ENCODE measurements at regions of chr16 and their contacts with region 1.

Region 1: DNA sequence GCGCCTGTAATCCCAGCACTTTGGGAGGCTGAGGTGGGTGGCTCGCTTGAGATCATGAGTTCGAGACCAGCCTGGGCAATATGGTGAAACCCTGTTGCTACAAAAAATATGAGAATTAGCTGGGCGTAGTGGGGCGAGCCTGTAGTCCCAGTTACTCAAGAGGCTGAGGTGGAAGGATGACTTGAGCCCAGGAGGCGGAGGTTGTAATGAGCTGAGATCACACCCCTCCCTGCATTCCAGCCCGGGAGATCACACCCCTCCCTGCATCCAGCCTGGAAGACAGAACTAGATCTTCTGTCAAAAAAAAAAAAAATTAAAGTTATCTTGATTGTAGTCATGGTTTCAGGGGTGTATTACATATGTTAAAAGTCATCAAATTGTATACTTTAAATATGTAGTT is 26.8 kb upstream of the GLG1 start:
- DNase-seq: no peak
- H3K4me3 ChIP-seq: no peak overlapping the region
- H3K27ac ChIP-seq: no peak overlapping the region
- H3K4me1 ChIP-seq: no peaks in the 10 kb centered on the region
- H3K27me3 ChIP-seq: no peaks in the 10 kb centered on the region
- CTCF ChIP-seq: no peak
- EP300 ChIP-seq: no peak
- POLR2A ChIP-seq: no peak

Region 2: DNA sequence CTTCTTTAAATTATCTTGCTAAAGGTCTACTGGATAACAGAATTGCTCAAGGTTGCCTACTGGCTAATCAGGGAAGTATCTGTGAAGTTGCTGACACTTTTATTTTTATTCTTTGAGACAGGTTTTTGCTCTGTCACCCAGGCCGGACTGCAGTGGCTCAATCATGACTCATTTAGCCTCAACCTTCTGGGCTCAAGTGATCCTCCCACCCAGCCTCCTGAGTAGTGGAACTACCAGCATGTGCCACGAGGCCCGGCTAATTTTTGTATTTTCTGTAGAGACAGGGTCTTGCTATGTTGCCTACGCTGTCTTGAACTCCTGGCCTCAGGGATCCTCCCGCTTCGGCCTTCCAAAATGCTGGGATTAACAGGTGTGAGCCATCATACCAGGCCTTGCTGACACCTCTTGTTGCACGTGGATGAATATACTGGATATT is 69.8 kb before region 1 on chr16:
- intact Hi-C with region 1: loop called in 1 of 4 experiments (anchors 10 kb)
- DNase-seq: no peak
- H3K4me3 ChIP-seq: no peak overlapping the region
- H3K27ac ChIP-seq: no peak overlapping the region
- H3K4me1 ChIP-seq: peaks cover 7% of the 10 kb centered on the region
- H3K27me3 ChIP-seq: no peaks in the 10 kb centered on the region
- CTCF ChIP-seq: no peak
- EP300 ChIP-seq: no peak
- POLR2A ChIP-seq: no peak

Region 3: DNA sequence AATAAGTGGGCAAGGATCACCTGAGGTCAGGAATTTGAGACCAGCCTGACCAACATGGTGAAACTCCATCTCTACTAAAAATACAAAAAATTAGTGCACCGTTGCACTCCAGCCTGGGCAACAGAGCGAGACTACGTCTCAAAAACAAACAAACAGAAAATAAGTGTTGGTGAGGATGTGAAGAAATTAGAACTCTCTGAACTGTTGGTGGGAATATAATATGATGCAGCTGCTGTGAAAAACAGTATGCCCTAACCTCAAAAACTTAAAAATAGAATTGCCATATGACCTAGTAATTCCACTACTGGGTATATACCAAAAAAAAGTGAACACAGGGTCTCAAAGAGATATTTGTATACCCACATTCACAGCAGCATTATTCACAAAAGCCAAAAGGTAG is 52.9 kb before region 1 on chr16:
- intact Hi-C with region 1: no loop called
- DNase-seq: no peak
- H3K4me3 ChIP-seq: no peak overlapping the region
- H3K27ac ChIP-seq: no peak overlapping the region
- H3K4me1 ChIP-seq: peaks cover 10% of the 10 kb centered on the region
- H3K27me3 ChIP-seq: no peaks in the 10 kb centered on the region
- CTCF ChIP-seq: no peak
- EP300 ChIP-seq: no peak
- POLR2A ChIP-seq: no peak

Region 4: DNA sequence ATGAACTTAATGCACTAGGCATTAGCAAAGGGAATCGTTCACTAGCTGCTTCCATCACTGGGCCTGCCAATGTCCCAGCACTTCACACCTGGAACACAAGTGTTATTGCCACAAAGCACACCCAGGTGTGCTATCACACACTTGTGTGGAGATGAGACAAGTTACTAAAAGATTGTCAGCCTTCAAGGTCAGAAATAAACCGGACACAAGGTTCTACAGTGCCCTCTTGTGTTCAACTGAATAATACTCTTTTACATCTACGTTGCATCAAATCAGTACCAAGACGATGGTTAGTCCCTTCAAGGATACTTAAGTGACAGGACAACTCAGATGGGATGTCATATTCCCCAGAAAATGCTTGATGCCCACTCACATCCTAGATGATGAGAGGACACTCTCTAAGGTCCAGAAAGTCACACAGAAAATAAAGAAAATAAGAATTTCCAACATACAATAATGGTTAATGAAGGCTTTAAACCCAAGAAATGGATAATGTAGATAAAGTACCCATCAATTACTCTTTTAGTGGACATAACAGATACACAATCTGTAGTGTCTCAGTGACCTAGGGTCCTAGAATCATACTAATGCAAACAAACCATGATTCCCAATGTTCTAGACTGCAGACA is 10.4 kb before region 1 on chr16:
- intact Hi-C with region 1: no loop called
- DNase-seq: no peak
- H3K4me3 ChIP-seq: no peak overlapping the region
- H3K27ac ChIP-seq: no peak overlapping the region
- H3K4me1 ChIP-seq: peaks cover 7% of the 10 kb centered on the region
- H3K27me3 ChIP-seq: no peaks in the 10 kb centered on the region
- CTCF ChIP-seq: peak in 2 of 3 donors; percentile 21 to 33
- EP300 ChIP-seq: no peak
- POLR2A ChIP-seq: no peak

Region 5: DNA sequence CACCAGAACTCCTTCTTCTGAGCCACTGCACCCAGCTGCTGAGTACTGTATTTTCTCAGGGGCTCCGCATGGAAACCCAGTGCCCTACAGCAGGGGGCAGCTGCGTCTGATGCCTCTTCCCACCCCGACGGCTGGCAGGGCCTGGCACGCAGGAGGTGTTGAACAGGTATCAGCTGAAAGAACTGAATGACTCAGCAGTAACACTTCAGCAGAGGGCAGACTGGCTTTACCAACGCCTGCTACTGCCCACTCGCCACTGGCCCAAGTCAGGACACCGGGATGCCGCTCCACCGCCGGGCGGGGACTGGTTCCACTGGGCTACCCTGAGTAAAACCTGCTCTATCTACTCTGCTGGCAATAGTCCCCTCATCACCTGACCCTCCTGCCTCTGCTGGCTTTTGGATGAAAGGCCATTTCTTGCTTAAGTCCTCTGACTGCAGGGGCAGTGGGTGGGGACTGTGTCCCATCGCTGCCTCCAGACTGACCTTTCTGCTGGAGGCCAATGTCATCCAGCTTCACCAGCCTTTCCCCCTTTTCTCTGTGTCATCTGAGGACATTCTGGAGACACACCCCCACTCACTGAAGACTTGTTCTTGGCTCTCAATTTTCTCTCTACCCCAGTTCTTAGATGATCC is 241.3 kb after region 1 on chr16:
- intact Hi-C with region 1: no loop called
- DNase-seq: no peak
- H3K4me3 ChIP-seq: no peak overlapping the region
- H3K27ac ChIP-seq: no peak overlapping the region
- H3K4me1 ChIP-seq: no peaks in the 10 kb centered on the region
- H3K27me3 ChIP-seq: no peaks in the 10 kb centered on the region
- CTCF ChIP-seq: no peak
- EP300 ChIP-seq: no peak
- POLR2A ChIP-seq: no peak